ENCODE measurements at regions of chr17 and their contacts with region 1.

Region 1: GRCh38 chr17:51120739-51121617 is at the start of gene SPAG9:
- DNase-seq: peak; percentile 80 to 97 (median 91)
- H3K4me3 ChIP-seq: peak within 1 kb of the TSS; percentile 69 to 100 (median 96)
- H3K27ac ChIP-seq: peak within 1 kb of the TSS; percentile 84 to 99 (median 96)
- H3K27me3 ChIP-seq: no peaks in the 10 kb centered on the region
- CTCF ChIP-seq: peak in 6 of 56 donors; percentile 12 to 29 (median 18)
- total RNA-seq, gene SPAG9: 177 to 522 (median 260) TPM

Region 2: GRCh38 chr17:51000835-51001638 is 119.9 kb before region 1 on chr17:
- intact Hi-C with region 1: loop called in 1 of 2 experiments (anchors 10 kb)
- DNase-seq: peak in 1 of 10 donors; percentile 28
- H3K4me3 ChIP-seq: no peak overlapping the region
- H3K27ac ChIP-seq: peak overlapping the region in 53 of 59 donors; percentile 2 to 87 (median 62)
- H3K27me3 ChIP-seq: no peaks in the 10 kb centered on the region
- CTCF ChIP-seq: peak; percentile 40 to 92 (median 73)

Region 3: DNA sequence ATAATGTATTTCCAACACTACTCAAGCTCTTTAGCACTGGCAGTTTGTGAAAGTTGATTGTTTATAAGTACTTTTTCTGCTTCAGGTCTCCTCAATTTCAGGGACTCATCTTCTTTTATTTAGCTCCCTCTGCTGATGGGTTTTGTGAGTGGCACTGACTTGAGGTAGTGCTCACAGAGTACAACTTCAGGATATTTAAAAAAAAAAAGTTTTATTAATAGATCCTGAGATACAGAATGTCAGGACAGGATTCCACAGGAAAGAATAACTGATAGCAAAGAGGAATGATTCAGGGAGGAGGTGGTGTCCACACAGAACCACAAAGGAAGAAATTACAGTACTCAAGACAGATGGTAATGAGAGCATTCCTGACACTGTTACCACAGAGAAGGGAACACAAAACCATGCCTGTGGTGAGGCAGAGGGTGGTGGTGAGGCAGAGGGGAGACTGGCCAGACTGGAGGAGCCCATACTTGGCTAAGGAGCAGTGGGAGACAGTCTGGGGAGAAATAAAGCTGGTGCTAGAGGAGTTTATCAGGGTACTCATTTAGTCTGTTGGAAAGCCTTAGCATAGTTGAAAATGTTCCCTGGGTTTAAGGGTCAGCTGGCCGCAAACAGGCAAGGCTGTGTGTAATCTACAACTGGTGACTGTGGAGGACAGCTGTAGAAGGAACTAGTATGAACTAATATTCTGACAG is 64.0 kb before region 1 on chr17:
- intact Hi-C with region 1: loop called in 1 of 2 experiments (anchors 5 kb)
- DNase-seq: peak in 2 of 10 donors; percentile 14 to 57
- H3K4me3 ChIP-seq: peak overlapping the region in 13 of 59 donors; percentile 1 to 40 (median 15)
- H3K27ac ChIP-seq: peak overlapping the region in 58 of 59 donors; percentile 4 to 91 (median 73)
- H3K27me3 ChIP-seq: no peaks in the 10 kb centered on the region
- CTCF ChIP-seq: peak; percentile 51 to 88 (median 76)

Region 4: GRCh38 chr17:51144266-51145022 is 23.5 kb after region 1 on chr17:
- intact Hi-C with region 1: no loop called
- DNase-seq: no peak
- H3K4me3 ChIP-seq: no peak overlapping the region
- H3K27ac ChIP-seq: no peak overlapping the region
- H3K27me3 ChIP-seq: no peaks in the 10 kb centered on the region
- CTCF ChIP-seq: no peak

Region 5: DNA sequence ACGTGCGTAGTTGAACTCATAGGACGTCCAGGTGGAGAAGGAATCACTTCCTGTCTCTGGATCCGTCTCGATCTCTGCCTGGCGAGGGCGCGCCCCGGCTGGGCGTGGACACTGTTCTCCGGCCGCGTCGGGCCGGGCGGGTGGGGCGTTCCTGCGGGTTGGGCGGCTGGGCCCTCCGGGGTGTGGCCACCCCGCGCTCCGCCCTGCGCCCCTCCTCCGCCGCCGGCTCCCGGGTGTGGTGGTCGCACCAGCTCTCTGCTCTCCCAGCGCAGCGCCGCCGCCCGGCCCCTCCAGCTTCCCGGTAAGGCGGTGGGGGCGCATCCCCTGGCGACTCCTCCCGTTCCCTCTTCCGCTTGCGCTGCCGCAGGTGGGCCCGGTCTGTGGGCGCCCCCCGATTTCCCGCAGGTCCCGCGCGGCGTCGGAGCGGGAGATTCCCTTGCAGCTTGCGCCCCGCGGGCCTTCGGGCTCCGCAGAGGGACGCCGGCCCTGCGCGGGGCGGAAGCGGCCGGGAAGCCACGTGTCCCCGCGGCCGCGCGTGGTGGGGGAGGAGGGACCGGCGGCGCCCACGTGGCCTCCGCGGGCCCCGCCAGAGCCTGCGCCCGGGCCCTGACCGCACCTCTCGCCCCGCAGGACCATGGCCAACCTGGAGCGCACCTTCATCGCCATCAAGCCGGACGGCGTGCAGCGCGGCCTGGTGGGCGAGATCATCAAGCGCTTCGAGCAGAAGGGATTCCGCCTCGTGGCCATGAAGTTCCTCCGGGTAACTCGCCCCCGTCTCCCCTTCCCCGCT is 45.4 kb after region 1 on chr17 and contains the start of gene NME2:
- intact Hi-C with region 1: loop called in 1 of 2 experiments (anchors 5 kb)
- DNase-seq: peak; percentile 57 to 85 (median 74)
- H3K4me3 ChIP-seq: peak within 1 kb of the TSS; percentile 75 to 97 (median 88)
- H3K27ac ChIP-seq: peak within 1 kb of the TSS; percentile 23 to 94 (median 88)
- H3K27me3 ChIP-seq: no peaks in the 10 kb centered on the region
- CTCF ChIP-seq: peak in 8 of 56 donors; percentile 9 to 23 (median 14)
- total RNA-seq, gene NME2: 99.4 to 250 (median 169) TPM